ENCODE measurements at regions of chr1 and their contacts with region 1.

Region 1: DNA sequence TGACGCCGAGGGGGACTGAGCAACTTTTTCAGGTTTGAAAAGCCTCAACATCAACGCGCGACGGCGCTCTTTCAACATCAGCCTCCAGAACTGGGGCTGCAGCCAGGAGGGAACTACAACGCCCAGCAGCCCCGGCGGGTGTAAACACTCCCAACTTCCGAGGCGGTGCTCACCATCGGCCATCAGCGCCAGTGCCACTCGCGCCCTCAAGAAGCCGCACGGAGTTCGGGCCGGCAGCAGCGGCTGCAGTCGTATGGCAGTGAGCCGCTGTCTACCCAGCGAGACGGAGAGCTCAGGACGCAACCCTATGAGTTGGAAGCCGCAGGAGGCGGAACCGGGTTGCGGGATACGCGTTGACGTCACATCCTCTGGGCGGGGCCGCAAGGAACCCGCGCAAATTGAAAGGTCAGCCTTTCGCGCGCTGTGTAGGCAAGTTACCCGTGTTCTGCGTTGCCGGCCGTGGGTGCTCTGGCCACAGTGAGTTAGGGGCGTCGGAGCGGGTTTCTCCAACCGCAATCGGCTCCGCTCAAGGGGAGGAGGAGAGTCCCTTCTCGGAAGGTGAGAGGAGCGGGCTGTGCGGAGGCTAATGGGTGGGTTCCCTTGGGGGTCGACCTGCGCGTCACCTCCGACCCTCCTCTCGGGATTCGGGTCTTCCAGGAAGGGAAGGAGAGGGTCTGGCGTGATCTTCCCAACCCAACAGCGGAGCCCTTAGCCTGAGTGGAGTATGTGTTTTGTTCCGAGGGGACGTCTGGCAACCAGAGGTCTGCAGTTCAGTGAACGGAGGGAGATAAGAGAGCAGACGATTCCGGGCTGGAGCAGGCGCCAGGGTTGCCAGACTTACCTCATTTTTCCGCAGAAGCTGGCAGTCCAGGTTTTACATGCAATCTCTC is at the start of gene EXO1:
- DNase-seq: peak; percentile 94
- H3K4me3 ChIP-seq: peak within 1 kb of the TSS; percentile 98
- H3K27ac ChIP-seq: peak within 1 kb of the TSS; percentile 94
- H3K4me1 ChIP-seq: peaks cover 26% of the 10 kb centered on the region
- CTCF ChIP-seq: peak; percentile 75
- total RNA-seq, gene EXO1: 60.3 and 67.7 TPM in 2 replicates

Region 2: DNA sequence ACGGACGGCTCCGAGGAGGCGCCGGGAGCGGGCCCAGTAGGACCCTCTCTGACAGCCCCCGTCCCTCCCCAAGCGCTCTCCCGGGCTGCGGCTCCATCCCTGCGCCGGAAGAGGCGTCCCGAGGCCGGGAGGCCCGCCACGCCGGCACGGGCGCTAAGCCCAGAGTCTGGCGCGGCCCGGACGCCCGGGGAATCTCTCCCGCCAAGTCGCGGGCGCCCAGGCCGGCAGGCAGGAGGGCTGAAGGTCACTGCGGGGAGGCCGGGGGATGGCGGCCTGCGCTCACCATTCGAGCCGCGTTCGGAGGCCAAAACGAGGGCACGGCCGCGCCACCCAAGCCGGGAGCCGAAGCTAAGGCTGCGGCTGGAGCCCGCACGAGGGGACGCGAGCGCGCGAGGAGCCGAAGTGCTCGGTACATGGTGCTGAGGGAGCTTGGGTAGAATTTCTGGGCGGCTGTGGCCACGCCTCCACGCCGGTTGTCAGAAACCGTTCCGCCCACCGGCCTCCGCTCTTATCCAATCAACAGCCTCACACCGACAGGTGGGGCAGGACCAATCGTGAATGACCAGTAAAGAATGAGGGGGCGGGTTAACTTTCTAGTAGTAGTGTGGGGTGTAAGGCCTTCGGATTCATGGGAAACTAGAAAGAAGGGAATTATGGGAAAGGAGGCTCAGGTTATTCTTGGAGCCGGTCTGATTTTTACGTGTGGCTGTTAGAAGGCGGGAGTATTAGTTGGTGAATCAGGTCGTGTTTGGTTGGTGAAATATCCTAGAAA is 328.5 kb before region 1 on chr1 and contains the start of gene FH:
- CTCF ChIA-PET with region 1: no interaction called
- POLR2A ChIA-PET with region 1: interaction called, 5 read pairs
- intact Hi-C with region 1: loop called (anchors 1 kb)
- DNase-seq: peak; percentile 96
- H3K4me3 ChIP-seq: peak within 1 kb of the TSS; percentile 88
- H3K27ac ChIP-seq: peak within 1 kb of the TSS; percentile 45
- H3K4me1 ChIP-seq: peaks cover 22% of the 10 kb centered on the region
- CTCF ChIP-seq: no peak
- total RNA-seq, gene FH: 44.0 and 45.5 TPM in 2 replicates

Region 3: GRCh38 chr1:241611063-241611462 is 237.0 kb before region 1 on chr1:
- CTCF ChIA-PET with region 1: no interaction called
- POLR2A ChIA-PET with region 1: interaction called, 3 read pairs
- intact Hi-C with region 1: loop called (anchors 5 kb)
- DNase-seq: peak; percentile 82
- H3K4me3 ChIP-seq: no peak overlapping the region
- H3K27ac ChIP-seq: no peak overlapping the region
- H3K4me1 ChIP-seq: peaks cover 8% of the 10 kb centered on the region
- CTCF ChIP-seq: peak; percentile 92

Region 4: DNA sequence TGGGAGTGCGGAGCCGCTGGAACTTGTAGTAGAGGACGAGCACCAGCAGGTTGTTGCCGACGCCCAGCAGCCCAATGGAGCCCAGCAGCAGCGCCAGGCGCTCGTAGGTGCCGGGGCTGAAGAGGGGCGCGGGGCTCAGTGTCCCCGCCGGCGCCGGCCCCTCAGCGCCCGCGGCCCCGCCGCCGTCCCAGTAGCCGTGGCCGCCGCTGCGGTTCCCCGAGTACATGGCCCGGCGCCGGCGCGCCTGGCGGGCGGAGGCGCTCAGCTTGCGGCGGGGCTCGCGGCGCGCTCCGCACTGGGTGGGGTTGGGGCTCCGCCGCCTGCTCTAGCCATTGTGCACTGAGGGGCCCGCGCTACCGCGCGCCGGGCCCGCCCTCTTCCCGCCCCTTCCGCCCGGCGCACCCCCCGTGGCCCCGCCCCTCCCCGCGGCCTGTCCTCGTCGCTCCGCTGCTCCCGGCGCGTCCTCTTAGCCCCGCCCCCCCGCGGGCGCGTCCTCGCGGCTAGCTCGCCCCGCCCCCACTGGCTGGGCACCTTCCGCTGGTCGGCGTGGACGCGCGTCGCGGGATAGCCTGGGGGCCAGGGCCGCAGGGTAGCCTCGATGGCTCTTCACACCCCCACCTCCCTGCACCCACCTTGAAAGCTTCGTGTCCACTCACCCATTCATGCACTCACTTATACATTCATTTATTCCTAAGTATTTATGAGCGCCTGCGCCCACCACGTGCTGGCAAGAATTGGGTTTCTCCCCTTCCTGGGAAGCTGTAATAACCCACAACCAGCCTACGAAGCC is 207.8 kb before region 1 on chr1 and contains the starts of genes CHML and OPN3:
- CTCF ChIA-PET with region 1: no interaction called
- POLR2A ChIA-PET with region 1: interaction called, 3 read pairs
- intact Hi-C with region 1: loop called (anchors 2 kb)
- DNase-seq: peak; percentile 89
- H3K4me3 ChIP-seq: peak within 1 kb of the TSS; percentile 98
- H3K27ac ChIP-seq: peak within 1 kb of the TSS; percentile 21
- H3K4me1 ChIP-seq: peaks cover 36% of the 10 kb centered on the region
- CTCF ChIP-seq: no peak
- total RNA-seq, gene CHML: 19.2 and 22.6 TPM in 2 replicates
- total RNA-seq, gene OPN3: 18.9 and 19.8 TPM in 2 replicates

Region 5: GRCh38 chr1:241870746-241871430 is 22.8 kb after region 1 on chr1:
- CTCF ChIA-PET with region 1: no interaction called
- POLR2A ChIA-PET with region 1: interaction called, 10 read pairs
- intact Hi-C with region 1: no loop called
- DNase-seq: no peak
- H3K4me3 ChIP-seq: no peak overlapping the region
- H3K27ac ChIP-seq: no peak overlapping the region
- H3K4me1 ChIP-seq: no peaks in the 10 kb centered on the region
- CTCF ChIP-seq: no peak